ENCODE measurements at regions of chr3 and their contacts with region 1.

Region 1: GRCh38 chr3:140870370-140870769 is 71.3 kb upstream of the SLC25A36 start:
- DNase-seq: no peak

Region 2: DNA sequence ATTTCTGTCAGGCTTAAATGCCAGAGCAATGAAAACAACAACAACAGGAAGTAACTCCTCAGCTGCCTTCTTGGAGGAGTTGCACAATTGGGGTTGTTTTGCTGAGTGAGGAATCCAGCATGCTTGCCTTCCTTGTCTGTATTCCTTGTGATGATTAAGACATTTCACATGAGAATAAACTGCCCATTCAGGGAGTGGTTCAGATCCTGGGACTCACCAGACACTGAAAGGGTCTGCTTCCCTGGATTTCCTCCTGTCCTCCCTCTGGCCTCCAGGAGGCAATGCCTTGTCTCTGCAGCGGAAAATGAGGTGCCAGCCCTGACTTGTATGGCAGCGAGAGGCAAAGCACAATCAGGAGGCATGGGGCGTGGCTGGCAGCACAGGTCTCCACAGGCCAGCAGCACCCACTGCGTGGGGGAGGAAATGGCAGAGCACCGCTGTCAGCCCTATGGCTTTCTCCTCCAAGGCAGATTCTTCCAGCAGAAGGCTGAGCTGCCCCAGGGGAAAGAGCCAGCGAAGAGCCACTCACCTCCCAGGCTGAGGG is 1435.5 kb before region 1 on chr3:
- intact Hi-C with region 1: loop called in 1 of 2 experiments (anchors 10 kb)
- DNase-seq: no peak

Region 3: GRCh38 chr3:140766465-140766864 is 103.9 kb before region 1 on chr3:
- intact Hi-C with region 1: no loop called
- DNase-seq: no peak